PC-3 (cell line): ENCODE measurements at regions of chr1 and their contacts with region 1.

Region 1: GRCh38 chr1:10909697-10910671 is 102.5 kb upstream of the TARDBP start:
- DNase-seq: peak; percentile 68
- ATAC-seq: peak; percentile 81
- H3K4me3 ChIP-seq: no peak overlapping the region
- H3K27ac ChIP-seq: no peak overlapping the region
- H3K4me1 ChIP-seq: no peaks in the 10 kb centered on the region
- H3K27me3 ChIP-seq: no peaks in the 10 kb centered on the region
- CTCF ChIP-seq: peak; percentile 84

Region 2: DNA sequence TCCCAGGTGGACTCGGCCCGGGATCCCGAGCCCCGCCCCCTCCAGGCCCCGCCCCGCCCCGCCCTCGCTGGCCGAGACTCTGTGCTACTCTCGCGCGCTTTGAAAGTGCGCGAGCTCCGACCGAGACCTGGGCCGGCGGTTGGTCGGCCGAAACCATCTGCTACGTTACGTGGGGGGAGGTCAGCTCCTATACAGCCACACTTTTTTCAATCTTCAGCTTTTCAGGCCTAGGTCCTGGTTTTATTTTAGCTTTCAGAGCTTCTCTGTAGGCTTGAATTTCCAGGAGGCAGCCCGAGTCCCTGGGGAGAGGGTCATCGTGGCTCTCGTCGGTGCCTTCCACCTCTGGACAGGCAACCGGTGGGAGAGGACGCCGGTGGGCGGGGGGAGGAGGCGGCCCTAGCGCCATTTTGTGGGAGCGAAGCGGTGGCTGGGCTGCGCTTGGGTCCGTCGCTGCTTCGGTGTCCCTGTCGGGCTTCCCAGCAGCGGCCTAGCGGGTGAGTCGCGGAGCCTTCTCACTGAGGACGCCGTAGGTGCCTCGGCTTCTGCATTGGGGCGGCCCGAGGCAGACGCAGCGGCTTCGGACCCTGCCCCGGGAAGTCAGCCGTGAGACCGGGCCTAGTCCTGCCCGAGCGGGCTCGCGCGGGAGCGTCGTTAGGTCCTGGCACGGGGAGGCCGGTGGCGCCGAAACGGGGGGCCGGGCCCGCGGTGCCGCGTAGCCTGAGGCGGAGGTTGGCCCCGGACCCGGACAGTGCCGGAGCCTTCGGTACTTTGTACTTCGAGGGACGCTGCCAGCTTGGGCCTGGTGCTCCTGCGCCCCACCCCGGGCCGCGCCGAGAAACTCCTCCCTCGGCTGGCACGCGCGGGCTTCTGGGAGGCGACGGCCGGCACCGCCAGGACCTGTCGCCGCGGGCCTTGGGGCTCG is 102.5 kb after region 1 on chr1 and contains the start of gene TARDBP:
- CTCF ChIA-PET with region 1: no interaction called
- POLR2A ChIA-PET with region 1: no interaction called
- intact Hi-C with region 1: no loop called
- DNase-seq: peak; percentile 83
- ATAC-seq: peak; percentile 89
- H3K4me3 ChIP-seq: peak within 1 kb of the TSS; percentile 95
- H3K27ac ChIP-seq: peak within 1 kb of the TSS; percentile 81
- H3K4me1 ChIP-seq: peaks cover 15% of the 10 kb centered on the region
- H3K27me3 ChIP-seq: no peaks in the 10 kb centered on the region
- CTCF ChIP-seq: no peak
- total RNA-seq, gene TARDBP: 78.5 and 102 TPM in 2 replicates

Region 3: DNA sequence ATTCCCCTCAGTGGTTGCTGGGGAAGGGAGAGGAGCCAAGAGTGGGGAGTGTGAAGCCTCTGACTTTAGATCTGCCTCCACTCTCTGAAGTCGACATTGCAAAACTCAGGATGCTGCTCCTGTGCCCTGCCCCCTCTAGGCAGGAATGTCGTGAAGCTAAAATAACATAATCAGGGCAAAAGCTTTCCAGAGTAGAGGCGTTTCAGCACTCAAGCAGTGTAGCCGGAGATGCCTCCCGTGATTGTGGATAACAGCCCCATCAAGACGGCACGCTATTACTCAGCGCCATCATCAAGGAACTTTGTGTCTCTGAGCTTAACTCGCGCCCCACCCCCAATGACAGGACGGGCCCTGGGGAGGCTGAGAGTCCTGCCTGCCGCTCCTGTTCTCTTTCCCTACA is 684.2 kb after region 1 on chr1:
- CTCF ChIA-PET with region 1: interaction called, 11 read pairs
- POLR2A ChIA-PET with region 1: no interaction called
- intact Hi-C with region 1: no loop called
- DNase-seq: no peak
- ATAC-seq: no peak
- H3K4me3 ChIP-seq: no peak overlapping the region
- H3K27ac ChIP-seq: no peak overlapping the region
- H3K4me1 ChIP-seq: no peaks in the 10 kb centered on the region
- H3K27me3 ChIP-seq: peaks cover 23% of the 10 kb centered on the region
- CTCF ChIP-seq: peak; percentile 24; the same call in 1 of the 2 replicates